H1 (cell line): ENCODE measurements at regions of chr7 and their contacts with region 1.

Region 1: DNA sequence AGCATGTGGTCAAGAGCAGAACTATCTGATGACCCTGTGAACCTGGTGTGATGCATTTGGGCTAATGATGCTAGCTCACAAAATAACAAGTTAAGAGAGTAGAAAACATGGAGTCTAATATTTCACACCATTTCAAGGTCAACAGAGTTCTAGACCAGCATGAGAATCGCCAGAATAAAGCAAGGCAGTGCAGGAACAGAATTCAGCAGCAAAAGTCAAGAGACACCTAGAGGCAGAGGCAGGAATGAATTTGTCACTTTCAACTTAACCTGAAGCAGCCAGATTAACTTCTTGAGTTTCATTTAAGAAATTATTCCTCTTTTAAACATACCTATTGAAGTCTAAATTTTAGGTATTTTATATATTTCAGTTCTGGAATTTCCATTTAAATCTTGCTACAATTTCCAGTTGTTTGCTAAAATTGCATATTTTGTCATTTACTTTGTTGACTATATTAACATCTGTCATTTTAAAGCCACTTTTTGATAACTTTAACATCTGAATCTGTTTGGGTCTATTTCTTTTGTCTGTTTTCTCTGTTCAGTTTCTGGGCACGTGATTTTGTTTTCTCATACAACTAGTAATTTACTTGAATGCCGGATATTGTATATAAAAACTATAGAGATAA is 44.2 kb upstream of the PRSS58 start:
- DNase-seq: no peak
- H3K4me3 ChIP-seq: no peak overlapping the region
- H3K27ac ChIP-seq: no peak overlapping the region
- H3K4me1 ChIP-seq: no peaks in the 10 kb centered on the region
- H3K27me3 ChIP-seq: peaks cover 0 to 9% (median 4%) of the 10 kb centered on the region in 4 experiments; a peak in 3 of 7 replicates
- CTCF ChIP-seq: peak in 2 of 3 experiments; percentile 62 to 67; a peak in 3 of 4 replicates
- EP300 ChIP-seq: no peak
- POLR2A ChIP-seq: no peak
- RAD21 ChIP-seq: peak; percentile 26 to 38; a peak in 2 of 4 replicates

Region 2: DNA sequence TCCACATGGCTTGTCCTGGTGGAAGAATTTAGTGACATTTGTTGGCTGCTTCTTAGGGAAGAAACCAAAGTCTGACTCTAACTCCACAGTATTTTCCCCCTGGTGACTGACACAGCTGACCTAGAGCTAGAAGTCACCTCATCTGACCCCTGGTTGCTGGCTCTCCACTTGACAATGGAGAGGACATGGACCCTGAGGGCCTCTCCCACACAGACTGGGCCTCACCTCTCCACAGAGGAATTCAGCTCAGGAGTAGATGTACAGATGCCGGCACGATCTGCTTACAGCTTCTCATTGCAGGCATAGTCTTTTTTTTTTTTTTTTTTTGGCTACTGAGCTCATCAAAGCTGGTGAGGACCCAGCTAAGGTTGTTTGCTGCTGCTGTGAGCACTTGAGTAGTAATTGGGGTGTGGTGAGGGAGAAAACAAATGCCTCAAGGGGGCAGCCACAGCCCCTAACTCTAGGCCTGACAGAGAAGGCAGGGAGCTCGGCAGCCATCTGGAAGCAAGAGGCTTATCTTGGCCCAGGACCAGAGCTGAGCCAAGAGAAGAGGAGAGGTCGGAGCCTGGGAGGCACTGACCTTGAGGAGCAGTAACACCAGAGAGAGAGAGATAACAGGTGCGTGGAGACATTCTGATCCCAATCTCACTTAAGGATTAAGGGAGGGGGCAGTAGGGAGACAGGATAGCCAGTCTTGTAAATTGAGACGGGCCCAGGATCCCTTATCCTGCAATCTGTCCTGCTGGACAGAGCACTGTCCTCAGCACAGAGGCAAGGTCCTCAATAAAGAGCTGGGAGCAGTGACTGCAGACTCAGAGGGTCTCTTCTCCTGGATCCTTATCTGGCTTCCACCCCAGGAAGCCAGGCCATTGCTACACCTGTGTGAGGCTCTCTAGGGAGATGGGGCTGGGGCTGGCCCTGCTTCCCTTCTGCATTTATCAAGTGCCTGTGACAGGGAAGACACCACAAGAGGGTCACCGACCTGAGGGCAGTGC is 53.6 kb before region 1 on chr7:
- CTCF ChIA-PET with region 1: interaction called, 57 read pairs
- POLR2A ChIA-PET with region 1: no interaction called
- DNase-seq: peak in 1 of 2 experiments; percentile 51
- H3K4me3 ChIP-seq: no peak overlapping the region
- H3K27ac ChIP-seq: no peak overlapping the region
- H3K4me1 ChIP-seq: peaks cover 0 to 5% (median 2%) of the 10 kb centered on the region in 4 experiments; a peak in 2 of 7 replicates
- H3K27me3 ChIP-seq: no peaks in the 10 kb centered on the region
- CTCF ChIP-seq: peak in 1 of 3 experiments; percentile 30; a peak in 2 of 4 replicates
- EP300 ChIP-seq: no peak
- POLR2A ChIP-seq: no peak
- RAD21 ChIP-seq: peak in 1 of 2 experiments; percentile 34; a peak in 1 of 4 replicates

Region 3: DNA sequence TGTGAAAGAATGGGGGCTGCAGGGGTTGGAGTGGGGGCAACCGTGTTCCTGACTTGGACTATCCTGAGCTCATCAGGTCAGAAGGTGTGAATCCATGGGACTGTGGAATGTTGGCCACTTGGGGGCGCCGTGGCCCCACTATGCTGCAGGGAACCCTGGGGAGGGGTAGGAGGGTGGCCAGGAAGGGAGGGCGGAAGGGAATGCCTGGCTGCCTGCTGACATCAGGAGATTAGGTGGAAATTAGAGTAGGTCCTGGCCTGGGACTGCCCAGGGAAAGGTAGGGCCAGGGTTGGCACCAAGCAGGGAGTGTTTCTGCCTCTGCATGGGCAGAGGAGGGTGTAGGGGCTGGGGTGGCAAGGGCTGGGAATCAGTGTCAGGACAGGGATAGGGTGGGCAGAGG is 21.7 kb after region 1 on chr7:
- CTCF ChIA-PET with region 1: interaction called, 302 read pairs
- POLR2A ChIA-PET with region 1: no interaction called
- DNase-seq: peak; percentile 50 to 90
- H3K4me3 ChIP-seq: no peak overlapping the region
- H3K27ac ChIP-seq: no peak overlapping the region
- H3K4me1 ChIP-seq: peaks cover 0 to 6% (median 1%) of the 10 kb centered on the region in 4 experiments; a peak in 4 of 7 replicates
- H3K27me3 ChIP-seq: no peaks in the 10 kb centered on the region
- CTCF ChIP-seq: peak; percentile 81 to 92 (median 87)
- EP300 ChIP-seq: 0 out of 3 replicates have a peak, but pooled peaks of 1 of the 2 experiments have one; percentile 24
- POLR2A ChIP-seq: no peak
- RAD21 ChIP-seq: peak; percentile 81 to 88

Region 4: GRCh38 chr7:142352543-142352942 is 50.5 kb after region 1 on chr7:
- CTCF ChIA-PET with region 1: interaction called, 42 read pairs
- POLR2A ChIA-PET with region 1: interaction called, 3 read pairs
- DNase-seq: no peak
- H3K4me3 ChIP-seq: no peak overlapping the region
- H3K27ac ChIP-seq: no peak overlapping the region
- H3K4me1 ChIP-seq: no peaks in the 10 kb centered on the region
- H3K27me3 ChIP-seq: no peaks in the 10 kb centered on the region
- CTCF ChIP-seq: no peak
- EP300 ChIP-seq: no peak
- POLR2A ChIP-seq: no peak
- RAD21 ChIP-seq: no peak

Region 5: DNA sequence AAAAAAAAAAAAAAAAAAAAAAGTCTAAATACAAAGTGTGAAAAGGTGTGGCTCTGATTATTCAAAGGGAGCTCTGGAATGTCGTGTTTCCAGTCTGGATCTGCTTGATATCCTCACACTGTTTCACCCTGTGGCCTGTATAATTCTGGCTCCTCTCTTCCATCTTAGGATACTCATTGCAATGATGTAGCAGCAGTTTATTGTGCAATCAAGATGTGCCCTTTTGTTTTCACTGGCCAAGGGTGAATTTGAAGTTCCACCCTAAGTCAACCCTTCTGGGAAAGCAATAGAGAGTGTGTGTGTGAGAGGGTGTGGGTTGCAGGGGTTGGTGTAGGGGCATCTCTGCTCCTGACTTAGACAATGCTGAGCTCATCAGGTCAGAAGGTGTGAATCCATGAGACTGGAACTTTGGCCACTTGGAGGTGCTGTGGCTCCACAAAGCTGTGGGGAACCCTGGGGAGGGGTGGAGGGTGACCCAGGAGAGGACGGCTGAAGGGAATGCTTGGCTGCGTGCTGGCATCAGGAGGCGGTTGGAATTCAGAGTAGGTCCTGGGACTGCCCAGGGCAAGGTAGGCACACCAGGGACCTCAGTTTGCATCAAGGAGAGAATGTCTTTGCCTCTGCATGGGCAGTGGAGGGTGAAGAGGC is 73.8 kb after region 1 on chr7:
- CTCF ChIA-PET with region 1: interaction called, 10 read pairs
- POLR2A ChIA-PET with region 1: no interaction called
- DNase-seq: peak; percentile 43 to 83
- H3K4me3 ChIP-seq: no peak overlapping the region
- H3K27ac ChIP-seq: no peak overlapping the region
- H3K4me1 ChIP-seq: peaks cover 0 to 14% (median 5%) of the 10 kb centered on the region in 4 experiments; a peak in 6 of 7 replicates
- H3K27me3 ChIP-seq: no peaks in the 10 kb centered on the region
- CTCF ChIP-seq: peak; percentile 72 to 87 (median 85)
- EP300 ChIP-seq: no peak
- POLR2A ChIP-seq: no peak
- RAD21 ChIP-seq: peak; percentile 77 to 86

Region 6: GRCh38 chr7:142478479-142479072 is 176.5 kb after region 1 on chr7:
- CTCF ChIA-PET with region 1: interaction called, 11 read pairs
- POLR2A ChIA-PET with region 1: no interaction called
- DNase-seq: no peak
- H3K4me3 ChIP-seq: no peak overlapping the region
- H3K27ac ChIP-seq: no peak overlapping the region
- H3K4me1 ChIP-seq: peaks cover 0 to 2% (median 0%) of the 10 kb centered on the region in 4 experiments; a peak in 1 of 7 replicates
- H3K27me3 ChIP-seq: no peaks in the 10 kb centered on the region
- CTCF ChIP-seq: peak; percentile 48 to 76 (median 69)
- EP300 ChIP-seq: no peak
- POLR2A ChIP-seq: no peak
- RAD21 ChIP-seq: peak; percentile 41 to 54